Activated naive CD4-positive, alpha-beta T cell treated with anti-CD3 and anti-CD28 coated beads, Interleukin-2, amount 10 ng/mL, durations not matched to agents 7 days and 5 days (primary cell): ENCODE measurements at regions of chr20 and their contacts with region 1.

Region 1: GRCh38 chr20:36754656-36755222 is 8.8 kb upstream of the NDRG3 start:
- DNase-seq: peak; percentile 61
- H3K4me3 Mint-ChIP-seq: no peak overlapping the region
- H3K27ac Mint-ChIP-seq: no peak overlapping the region
- H3K4me1 Mint-ChIP-seq: peaks cover 8% of the 10 kb centered on the region
- H3K27me3 Mint-ChIP-seq: no peaks in the 10 kb centered on the region

Region 2: DNA sequence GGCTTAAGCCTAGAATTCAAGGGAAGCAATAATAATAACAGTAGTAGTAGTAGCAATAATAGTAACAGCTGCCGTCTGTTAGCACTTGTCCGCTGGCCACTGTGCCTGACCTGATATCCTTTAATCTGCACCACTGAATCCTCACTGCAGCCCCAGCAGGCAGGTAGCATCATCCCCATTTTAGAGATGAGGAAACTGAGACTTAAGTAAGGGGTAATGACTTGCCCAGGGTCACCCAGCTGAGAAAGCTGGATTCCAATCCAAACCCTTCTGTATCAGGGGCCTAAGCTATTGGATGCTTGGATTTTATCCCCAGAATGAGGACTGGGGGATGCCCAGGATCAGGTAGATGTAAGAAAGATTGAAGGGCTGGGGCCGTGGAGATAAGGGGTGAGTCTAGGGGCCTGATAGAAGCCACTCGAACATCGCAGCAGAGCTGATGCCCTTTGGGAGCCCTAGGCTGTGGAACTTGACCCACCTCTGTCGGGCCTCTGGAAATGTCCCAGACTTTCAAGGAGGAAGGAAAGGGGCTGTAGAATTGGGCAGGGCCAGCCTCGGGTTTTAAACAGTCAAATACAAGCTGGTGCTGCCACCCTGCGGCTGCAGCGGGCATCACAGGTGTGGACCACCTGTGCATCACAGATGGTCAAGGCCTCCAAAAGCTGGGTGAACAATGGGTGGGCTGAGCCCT is 315.6 kb before region 1 on chr20:
- CTCF ChIA-PET with region 1: no interaction called
- DNase-seq: peak; percentile 75
- H3K4me3 Mint-ChIP-seq: no peak overlapping the region
- H3K27ac Mint-ChIP-seq: no peak overlapping the region
- H3K4me1 Mint-ChIP-seq: peaks cover 3% of the 10 kb centered on the region
- H3K27me3 Mint-ChIP-seq: peaks cover 55% of the 10 kb centered on the region

Region 3: GRCh38 chr20:36666181-36666740 is 88.5 kb before region 1 on chr20:
- CTCF ChIA-PET with region 1: interaction called, 21 read pairs
- DNase-seq: no peak
- H3K4me3 Mint-ChIP-seq: no peak overlapping the region
- H3K27ac Mint-ChIP-seq: no peak overlapping the region
- H3K4me1 Mint-ChIP-seq: peaks cover 2% of the 10 kb centered on the region
- H3K27me3 Mint-ChIP-seq: no peaks in the 10 kb centered on the region

Region 4: GRCh38 chr20:36728986-36729385 is 25.8 kb before region 1 on chr20:
- CTCF ChIA-PET with region 1: interaction called, 10 read pairs
- DNase-seq: no peak
- H3K4me3 Mint-ChIP-seq: no peak overlapping the region
- H3K27ac Mint-ChIP-seq: no peak overlapping the region
- H3K4me1 Mint-ChIP-seq: peaks cover 27% of the 10 kb centered on the region
- H3K27me3 Mint-ChIP-seq: no peaks in the 10 kb centered on the region

Region 5: GRCh38 chr20:36736451-36737182 is 18.1 kb before region 1 on chr20:
- CTCF ChIA-PET with region 1: interaction called, 12 read pairs
- DNase-seq: no peak
- H3K4me3 Mint-ChIP-seq: no peak overlapping the region
- H3K27ac Mint-ChIP-seq: no peak overlapping the region
- H3K4me1 Mint-ChIP-seq: peaks cover 37% of the 10 kb centered on the region
- H3K27me3 Mint-ChIP-seq: no peaks in the 10 kb centered on the region

Region 6: GRCh38 chr20:36773597-36774390 is 19.1 kb after region 1 on chr20 and contains the start of gene DSN1:
- CTCF ChIA-PET with region 1: interaction called, 11 read pairs
- DNase-seq: peak; percentile 98
- H3K4me3 Mint-ChIP-seq: peak within 1 kb of the TSS; percentile 79
- H3K27ac Mint-ChIP-seq: peak within 1 kb of the TSS; percentile 91
- H3K4me1 Mint-ChIP-seq: peaks cover 46% of the 10 kb centered on the region
- H3K27me3 Mint-ChIP-seq: peaks cover 23% of the 10 kb centered on the region

Region 7: GRCh38 chr20:36861875-36862801 is 107.4 kb after region 1 on chr20:
- CTCF ChIA-PET with region 1: no interaction called
- DNase-seq: no peak
- H3K4me3 Mint-ChIP-seq: peak overlapping the region; percentile 43
- H3K27ac Mint-ChIP-seq: no peak overlapping the region
- H3K4me1 Mint-ChIP-seq: peaks cover 16% of the 10 kb centered on the region
- H3K27me3 Mint-ChIP-seq: peaks cover 72% of the 10 kb centered on the region